ENCODE measurements at regions of chr2 and their contacts with region 1.

Region 1: GRCh38 chr2:178478439-178479274 is at the start of gene FKBP7:
- DNase-seq: peak; percentile 85
- H3K4me3 ChIP-seq: peak within 1 kb of the TSS; percentile 51 to 98 (median 91)
- H3K27ac ChIP-seq: peak within 1 kb of the TSS; percentile 88
- H3K4me1 ChIP-seq: peaks cover 29% of the 10 kb centered on the region
- H3K27me3 ChIP-seq: no peaks in the 10 kb centered on the region
- CTCF ChIP-seq: peak; percentile 68 to 71
- POLR2A ChIP-seq: peak; percentile 63
- total RNA-seq, gene FKBP7: 18.3 and 20.5 TPM in 2 replicates

Region 2: GRCh38 chr2:178450774-178451525 is 27.7 kb before region 1 on chr2 and contains the starts of genes PJVK and PRKRA:
- CTCF ChIA-PET with region 1: no interaction called
- POLR2A ChIA-PET with region 1: interaction called, 10 read pairs
- dilution Hi-C with region 1: no loop called
- intact Hi-C with region 1: loop called (anchors 1 kb)
- DNase-seq: peak; percentile 99
- H3K4me3 ChIP-seq: peak within 1 kb of the TSS; percentile 65 to 94 (median 75)
- H3K27ac ChIP-seq: peak within 1 kb of the TSS; percentile 94
- H3K4me1 ChIP-seq: peaks cover 15% of the 10 kb centered on the region
- H3K27me3 ChIP-seq: no peaks in the 10 kb centered on the region
- CTCF ChIP-seq: no peak
- POLR2A ChIP-seq: peak; percentile 96
- total RNA-seq, gene PJVK: 1.4 and 1.8 TPM in 2 replicates
- total RNA-seq, gene PRKRA: 42.4 and 46.6 TPM in 2 replicates

Region 3: GRCh38 chr2:178498137-178498536 is 19.5 kb after region 1 on chr2:
- CTCF ChIA-PET with region 1: no interaction called
- POLR2A ChIA-PET with region 1: no interaction called
- dilution Hi-C with region 1: no loop called
- intact Hi-C with region 1: no loop called
- DNase-seq: no peak
- H3K4me3 ChIP-seq: no peak overlapping the region
- H3K27ac ChIP-seq: no peak overlapping the region
- H3K4me1 ChIP-seq: no peaks in the 10 kb centered on the region
- H3K27me3 ChIP-seq: no peaks in the 10 kb centered on the region
- CTCF ChIP-seq: no peak
- POLR2A ChIP-seq: no peak

Region 4: GRCh38 chr2:178522950-178523595 is 44.4 kb after region 1 on chr2:
- CTCF ChIA-PET with region 1: interaction called, 3 read pairs
- POLR2A ChIA-PET with region 1: no interaction called
- dilution Hi-C with region 1: no loop called
- intact Hi-C with region 1: loop called (anchors 1 kb)
- DNase-seq: peak; percentile 83
- H3K4me3 ChIP-seq: peak overlapping the region; percentile 17 to 77 (median 39)
- H3K27ac ChIP-seq: peak overlapping the region; percentile 36
- H3K4me1 ChIP-seq: peaks cover 4% of the 10 kb centered on the region
- H3K27me3 ChIP-seq: no peaks in the 10 kb centered on the region
- CTCF ChIP-seq: peak; percentile 79 to 85
- POLR2A ChIP-seq: peak; percentile 73

Region 5: GRCh38 chr2:178536037-178536436 is 57.4 kb after region 1 on chr2:
- CTCF ChIA-PET with region 1: no interaction called
- POLR2A ChIA-PET with region 1: no interaction called
- dilution Hi-C with region 1: no loop called
- intact Hi-C with region 1: no loop called
- DNase-seq: no peak
- H3K4me3 ChIP-seq: no peak overlapping the region
- H3K27ac ChIP-seq: no peak overlapping the region
- H3K4me1 ChIP-seq: peaks cover 10% of the 10 kb centered on the region
- H3K27me3 ChIP-seq: no peaks in the 10 kb centered on the region
- CTCF ChIP-seq: no peak
- POLR2A ChIP-seq: no peak

Region 6: DNA sequence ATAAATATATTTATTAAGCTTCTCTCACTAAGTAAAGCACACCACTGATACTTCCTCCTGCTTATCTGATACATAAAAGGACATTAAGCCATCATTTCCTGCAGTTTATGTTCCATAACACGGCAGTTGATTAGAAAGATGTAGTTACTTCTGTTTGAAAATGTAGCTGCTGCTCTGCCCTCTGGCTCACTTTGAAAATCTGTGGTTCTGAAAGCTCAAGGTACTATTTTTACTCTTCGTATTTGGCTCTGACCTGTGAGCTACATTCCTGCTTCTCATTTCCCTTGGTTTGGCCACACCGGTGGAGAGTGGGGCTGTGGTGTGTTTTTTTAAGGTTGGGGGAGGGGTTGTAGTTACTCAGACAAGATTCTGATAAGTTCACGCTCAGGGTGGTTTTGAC is 341.3 kb after region 1 on chr2:
- CTCF ChIA-PET with region 1: no interaction called
- POLR2A ChIA-PET with region 1: no interaction called
- dilution Hi-C with region 1: no loop called
- intact Hi-C with region 1: loop called (anchors 10 kb)
- DNase-seq: peak; percentile 63
- H3K4me3 ChIP-seq: peak overlapping the region in 2 of 3 experiments; percentile 27 to 66
- H3K27ac ChIP-seq: peak overlapping the region; percentile 80
- H3K4me1 ChIP-seq: peaks cover 21% of the 10 kb centered on the region
- H3K27me3 ChIP-seq: no peaks in the 10 kb centered on the region
- CTCF ChIP-seq: no peak
- POLR2A ChIP-seq: no peak

Region 7: GRCh38 chr2:178914259-178914849 is 435.7 kb after region 1 on chr2:
- CTCF ChIA-PET with region 1: no interaction called
- POLR2A ChIA-PET with region 1: no interaction called
- dilution Hi-C with region 1: no loop called
- intact Hi-C with region 1: loop called (anchors 1 kb)
- DNase-seq: peak; percentile 88
- H3K4me3 ChIP-seq: no peak overlapping the region
- H3K27ac ChIP-seq: no peak overlapping the region
- H3K4me1 ChIP-seq: peaks cover 2% of the 10 kb centered on the region
- H3K27me3 ChIP-seq: peaks cover 0 to 10% of the 10 kb centered on the region in 2 experiments
- CTCF ChIP-seq: peak; percentile 79 to 88
- POLR2A ChIP-seq: no peak

Region 8: DNA sequence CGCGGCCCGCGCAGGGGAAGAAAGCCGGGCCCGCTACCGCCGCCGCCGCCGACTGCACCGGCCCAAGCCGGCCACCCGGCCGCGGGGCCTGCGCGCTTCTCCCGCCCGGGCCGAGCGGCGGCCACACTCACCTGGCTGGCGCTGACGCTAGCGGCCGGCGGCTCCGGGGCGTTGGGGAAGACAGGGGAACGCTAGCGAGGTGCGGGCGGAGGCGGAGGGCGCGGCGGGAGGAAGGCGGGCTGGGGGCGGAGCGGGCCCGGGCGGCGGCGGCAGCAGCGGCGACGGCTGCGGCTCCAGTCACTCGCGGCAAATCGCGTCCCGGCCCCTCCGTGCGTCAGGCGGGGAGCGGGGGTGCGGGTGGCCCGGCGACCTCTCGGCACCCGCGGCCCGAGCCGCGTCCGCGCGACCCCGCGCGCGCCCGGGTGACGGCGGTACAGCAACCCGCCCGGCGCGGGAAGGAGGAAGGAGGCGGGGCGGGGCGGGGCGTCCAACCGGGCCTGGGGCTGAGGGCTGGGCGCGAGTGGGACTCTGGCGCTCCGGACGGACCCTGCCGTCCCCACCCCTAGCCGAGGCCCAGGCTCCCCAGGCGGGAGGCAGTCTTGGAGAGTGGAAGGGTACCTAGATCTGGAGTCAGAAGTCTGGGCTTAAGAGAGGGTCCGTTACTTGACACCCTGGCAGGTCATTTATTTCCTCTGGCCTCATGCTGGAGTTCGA is 785.9 kb after region 1 on chr2 and contains the start of gene SESTD1:
- CTCF ChIA-PET with region 1: no interaction called
- POLR2A ChIA-PET with region 1: no interaction called
- dilution Hi-C with region 1: no loop called
- intact Hi-C with region 1: loop called (anchors 5 kb)
- DNase-seq: peak; percentile 56
- H3K4me3 ChIP-seq: peak within 1 kb of the TSS; percentile 68 to 85 (median 76)
- H3K27ac ChIP-seq: peak within 1 kb of the TSS; percentile 31
- H3K4me1 ChIP-seq: peaks cover 22% of the 10 kb centered on the region
- H3K27me3 ChIP-seq: no peaks in the 10 kb centered on the region
- CTCF ChIP-seq: no peak
- POLR2A ChIP-seq: peak; percentile 40
- total RNA-seq, gene SESTD1: 72.4 and 79.9 TPM in 2 replicates